A673 (cell line): ENCODE measurements at regions of chr15 and their contacts with region 1.

Region 1: DNA sequence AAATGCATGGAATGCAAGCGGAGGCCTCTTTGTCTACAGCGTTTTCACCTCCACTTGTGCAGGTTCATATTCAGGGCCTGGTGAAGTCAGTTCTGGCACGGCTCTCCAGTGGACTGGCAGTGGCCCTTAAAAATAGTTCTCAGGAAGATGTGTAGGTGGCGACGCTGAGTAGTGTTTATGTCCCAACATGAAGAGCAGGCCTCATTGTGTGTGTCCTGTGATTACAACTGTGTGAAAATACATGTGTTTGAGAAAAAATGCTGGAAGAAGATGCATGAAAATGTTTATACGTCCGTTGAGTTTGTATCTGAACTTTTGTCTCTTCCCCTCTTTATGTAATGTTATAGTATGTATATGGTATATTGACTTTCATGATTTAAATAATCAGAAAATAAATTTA is 7.2 kb downstream of the LIPC start:
- DNase-seq: peak; percentile 77
- H3K4me3 ChIP-seq: no peak overlapping the region
- H3K27ac ChIP-seq: no peak overlapping the region
- H3K4me1 ChIP-seq: peaks cover 8% of the 10 kb centered on the region
- H3K27me3 ChIP-seq: no peaks in the 10 kb centered on the region
- CTCF ChIP-seq: peak; percentile 69

Region 2: DNA sequence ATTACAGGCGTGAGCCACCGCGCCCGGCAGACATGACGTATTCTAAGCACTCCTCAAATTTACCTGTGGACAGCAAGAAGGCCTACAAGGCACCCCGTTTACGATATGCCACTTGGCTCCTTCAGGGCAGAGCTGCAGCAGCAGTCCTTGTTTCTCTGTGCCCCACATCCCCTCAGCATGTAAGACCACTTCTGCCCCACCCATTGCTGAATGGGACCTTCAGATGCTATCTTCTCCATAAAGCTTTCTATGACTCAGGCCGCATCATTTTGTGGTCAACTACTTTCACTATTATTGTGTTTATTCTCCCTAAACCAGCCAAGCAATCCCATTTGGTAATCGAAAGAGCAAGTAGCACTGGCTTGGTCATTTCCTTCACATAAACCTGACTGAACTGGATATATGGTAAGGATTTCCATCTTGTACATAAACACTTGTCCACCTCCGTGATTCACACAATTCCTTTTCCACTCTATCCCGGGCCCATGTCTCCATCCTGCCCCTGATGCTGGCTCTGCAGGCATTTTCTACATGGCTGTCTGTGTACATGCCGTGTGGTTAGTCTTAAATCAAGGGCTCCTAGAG is 18.5 kb after region 1 on chr15:
- CTCF ChIA-PET with region 1: no interaction called
- POLR2A ChIA-PET with region 1: no interaction called
- intact Hi-C with region 1: no loop called
- DNase-seq: no peak
- H3K4me3 ChIP-seq: no peak overlapping the region
- H3K27ac ChIP-seq: no peak overlapping the region
- H3K4me1 ChIP-seq: no peaks in the 10 kb centered on the region
- H3K27me3 ChIP-seq: no peaks in the 10 kb centered on the region
- CTCF ChIP-seq: no peak

Region 3: GRCh38 chr15:58684036-58684710 is 245.2 kb after region 1 on chr15:
- CTCF ChIA-PET with region 1: no interaction called
- POLR2A ChIA-PET with region 1: no interaction called
- intact Hi-C with region 1: loop called (anchors 5 kb)
- DNase-seq: no peak
- H3K4me3 ChIP-seq: no peak overlapping the region
- H3K27ac ChIP-seq: no peak overlapping the region
- H3K4me1 ChIP-seq: no peaks in the 10 kb centered on the region
- H3K27me3 ChIP-seq: no peaks in the 10 kb centered on the region
- CTCF ChIP-seq: no peak